CD14-positive monocyte (primary cell): ENCODE measurements at regions of chr18 and their contacts with region 1.

Region 1: DNA sequence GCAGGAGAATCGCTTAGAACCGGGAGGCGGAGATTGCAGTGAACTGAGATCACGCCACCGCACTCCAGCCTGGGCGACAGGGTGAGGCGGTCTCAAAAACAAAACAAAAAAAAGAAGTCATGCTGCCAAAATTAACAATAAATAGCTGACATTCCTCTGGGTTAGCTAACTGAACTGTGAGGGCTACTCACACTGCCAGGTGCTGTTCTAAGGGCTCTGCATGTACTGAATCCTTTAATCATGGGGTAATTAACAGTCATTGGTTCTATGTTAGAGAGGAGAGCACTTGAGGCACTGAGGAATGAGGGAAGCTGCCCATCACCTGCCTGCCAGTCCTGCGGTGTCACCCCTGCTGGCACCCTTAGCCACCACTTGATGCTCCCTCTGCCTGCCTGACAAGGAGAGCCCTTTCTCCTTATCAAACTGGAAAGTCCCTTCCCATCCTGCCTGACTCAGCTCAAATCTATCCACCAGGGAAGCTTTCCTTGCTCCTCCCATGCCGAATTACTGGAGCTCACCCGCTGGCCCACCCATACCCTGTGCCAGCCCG is 73.0 kb upstream of the RIOK3 start:
- DNase-seq: no peak
- H3K4me3 ChIP-seq: no peak overlapping the region
- H3K4me3 Mint-ChIP-seq: no peak overlapping the region
- H3K27ac ChIP-seq: no peak overlapping the region
- H3K27ac Mint-ChIP-seq: no peak overlapping the region
- H3K4me1 ChIP-seq: no peaks in the 10 kb centered on the region
- H3K4me1 Mint-ChIP-seq: no peaks in the 10 kb centered on the region
- H3K27me3 ChIP-seq: no peaks in the 10 kb centered on the region
- H3K27me3 Mint-ChIP-seq: peaks cover 0 to 2% (median 0%) of the 10 kb centered on the region in 3 donors
- CTCF ChIP-seq: no peak

Region 2: DNA sequence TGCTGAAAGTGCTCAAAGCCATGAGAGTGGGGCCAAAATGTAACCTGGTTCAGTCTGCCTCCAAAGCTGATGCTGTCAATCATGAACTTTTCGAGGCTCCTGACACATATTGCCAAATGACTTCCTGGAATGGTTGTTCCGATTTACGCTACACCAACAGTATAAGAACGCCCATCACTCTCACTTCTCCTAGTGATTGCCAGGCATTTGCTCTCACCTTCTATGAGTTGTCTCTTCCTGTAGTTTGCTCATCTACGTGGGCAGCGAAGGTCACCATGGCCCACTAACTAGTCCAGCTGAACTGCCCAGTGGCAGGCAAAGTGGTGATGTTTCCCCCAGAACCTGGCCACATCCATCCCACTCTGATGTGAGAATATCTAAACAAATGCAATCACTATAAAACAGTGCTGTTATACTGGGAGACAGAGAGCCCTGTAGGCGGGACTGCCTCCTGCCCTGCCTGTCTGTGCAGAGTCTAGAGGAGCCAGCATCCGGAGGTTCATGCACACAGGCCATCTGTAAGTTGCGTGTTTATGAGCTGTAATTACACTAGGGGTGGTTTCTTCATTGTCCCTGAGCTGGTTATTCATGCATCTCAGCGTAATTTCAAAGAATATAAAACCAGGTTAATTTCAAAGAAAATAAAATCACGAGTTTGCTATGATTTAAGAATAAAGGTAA is 253.6 kb before region 1 on chr18:
- intact Hi-C with region 1: loop called in 1 of 2 experiments (anchors 10 kb)
- DNase-seq: peak in 2 of 3 donors; percentile 35 to 42
- H3K4me3 ChIP-seq: no peak overlapping the region
- H3K4me3 Mint-ChIP-seq: peak overlapping the region in 1 of 2 donors; percentile 64
- H3K27ac ChIP-seq: no peak overlapping the region
- H3K27ac Mint-ChIP-seq: peak overlapping the region in 4 of 7 donors; percentile 27 to 79 (median 64)
- H3K4me1 ChIP-seq: peaks cover 9 to 11% of the 10 kb centered on the region in 2 donors
- H3K4me1 Mint-ChIP-seq: peaks cover 14% of the 10 kb centered on the region
- H3K27me3 ChIP-seq: no peaks in the 10 kb centered on the region
- H3K27me3 Mint-ChIP-seq: peaks cover 2 to 7% (median 3%) of the 10 kb centered on the region in 3 donors
- CTCF ChIP-seq: no peak

Region 3: DNA sequence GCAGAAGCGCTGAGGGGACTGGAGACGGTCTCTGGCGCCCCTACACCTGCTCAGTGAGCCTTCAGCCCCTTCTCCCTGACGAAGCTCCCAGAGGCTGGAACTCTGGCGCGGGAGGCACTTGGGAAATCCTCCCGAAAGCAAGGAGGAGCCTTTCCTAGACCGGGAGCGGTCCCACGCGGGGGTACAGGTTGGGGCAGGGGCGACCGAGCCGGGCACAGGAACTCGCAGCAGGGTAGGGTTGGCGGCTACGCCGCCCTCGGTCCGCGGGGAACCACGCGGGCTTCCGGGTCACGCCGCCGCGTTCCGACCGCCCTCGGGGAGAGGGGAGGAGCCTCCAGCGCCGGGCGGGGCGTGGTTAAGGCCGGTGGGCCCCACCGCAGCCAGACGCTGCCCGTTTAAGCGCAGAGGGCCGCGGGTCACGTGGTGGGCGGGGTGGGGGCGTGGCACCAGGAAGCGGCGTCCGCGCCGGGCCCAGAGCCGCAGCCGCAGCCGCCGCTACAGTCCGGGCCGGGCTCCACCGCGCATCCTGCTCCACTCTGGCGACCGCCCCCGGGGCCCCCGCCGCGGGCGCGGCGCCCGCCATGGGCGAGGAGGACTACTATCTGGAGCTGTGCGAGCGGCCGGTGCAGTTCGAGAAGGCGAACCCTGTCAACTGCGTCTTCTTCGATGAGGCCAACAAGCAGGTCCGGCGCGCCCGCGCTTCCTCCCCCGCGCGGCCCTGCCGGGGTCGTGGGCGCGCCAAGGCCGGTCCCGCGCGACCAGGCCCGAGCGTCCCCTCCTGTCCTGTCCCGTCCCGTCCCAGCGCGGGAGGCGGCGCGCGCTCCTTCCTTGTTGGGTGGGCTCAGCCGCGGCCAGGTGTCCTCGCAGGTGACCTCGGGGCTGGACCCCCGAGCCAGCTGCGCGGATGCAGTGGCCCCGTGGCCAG is 123.2 kb after region 1 on chr18 and contains the start of gene RMC1:
- intact Hi-C with region 1: no loop called
- DNase-seq: peak; percentile 94 to 97 (median 96)
- H3K4me3 ChIP-seq: peak within 1 kb of the TSS; percentile 71 to 95 (median 77)
- H3K4me3 Mint-ChIP-seq: peak within 1 kb of the TSS; percentile 92 to 97
- H3K27ac ChIP-seq: peak within 1 kb of the TSS; percentile 78 to 94
- H3K27ac Mint-ChIP-seq: peak within 1 kb of the TSS; percentile 91 to 97 (median 94)
- H3K4me1 ChIP-seq: peaks cover 45 to 56% of the 10 kb centered on the region in 2 donors
- H3K4me1 Mint-ChIP-seq: peaks cover 50% of the 10 kb centered on the region
- H3K27me3 ChIP-seq: no peaks in the 10 kb centered on the region
- H3K27me3 Mint-ChIP-seq: peaks cover 0 to 2% (median 1%) of the 10 kb centered on the region in 3 donors
- CTCF ChIP-seq: no peak
- polyA plus RNA-seq, gene RMC1: 21.9 to 70.8 (median 30.1) TPM